ENCODE measurements at regions of chr12 and their contacts with region 1.

Region 1: GRCh38 chr12:116656306-116656705 is 81.6 kb downstream of the SPRING1 start:
- DNase-seq: no peak
- H3K4me3 ChIP-seq: no peak overlapping the region
- H3K27ac ChIP-seq: no peak overlapping the region
- H3K4me1 ChIP-seq: no peaks in the 10 kb centered on the region
- CTCF ChIP-seq: no peak

Region 2: GRCh38 chr12:118307069-118307954 is 1651.0 kb after region 1 on chr12:
- CTCF ChIA-PET with region 1: no interaction called
- POLR2A ChIA-PET with region 1: interaction called, 11 read pairs
- intact Hi-C with region 1: no loop called
- DNase-seq: no peak
- H3K4me3 ChIP-seq: no peak overlapping the region
- H3K27ac ChIP-seq: no peak overlapping the region
- H3K4me1 ChIP-seq: peaks cover 18% of the 10 kb centered on the region
- CTCF ChIP-seq: no peak